PC-3 (cell line): ENCODE measurements at regions of chr2 and their contacts with region 1.

Region 1: GRCh38 chr2:54969940-54970338 is 80.3 kb downstream of the RTN4 start:
- DNase-seq: no peak
- ATAC-seq: no peak
- H3K4me3 ChIP-seq: no peak overlapping the region
- H3K27ac ChIP-seq: no peak overlapping the region
- H3K4me1 ChIP-seq: peaks cover 19% of the 10 kb centered on the region
- H3K27me3 ChIP-seq: no peaks in the 10 kb centered on the region
- CTCF ChIP-seq: no peak

Region 2: DNA sequence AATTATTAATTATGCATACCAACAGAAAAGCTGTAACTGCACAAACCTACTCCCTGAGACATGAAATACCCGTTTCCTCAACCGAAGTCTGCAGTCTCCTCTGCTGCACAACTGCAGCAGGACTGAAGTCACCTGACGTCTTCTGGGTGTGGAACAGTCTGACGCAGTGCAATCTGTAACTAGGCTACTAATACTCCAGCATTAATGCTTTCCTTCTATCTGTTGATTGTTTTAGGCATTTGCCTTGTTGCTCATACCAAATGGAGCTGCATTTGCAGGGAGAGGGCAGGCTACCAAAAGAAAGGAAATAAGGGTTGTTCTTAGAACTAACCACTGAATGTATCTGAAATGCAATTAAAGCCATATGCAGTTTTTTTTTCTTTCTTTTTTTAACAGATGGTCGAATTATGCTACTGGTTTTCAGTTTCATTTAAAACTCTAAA is 40.2 kb after region 1 on chr2:
- CTCF ChIA-PET with region 1: no interaction called
- POLR2A ChIA-PET with region 1: no interaction called
- intact Hi-C with region 1: loop called (anchors 5 kb)
- DNase-seq: peak; percentile 31
- ATAC-seq: peak; percentile 35
- H3K4me3 ChIP-seq: no peak overlapping the region
- H3K27ac ChIP-seq: no peak overlapping the region
- H3K4me1 ChIP-seq: peaks cover 54% of the 10 kb centered on the region
- H3K27me3 ChIP-seq: no peaks in the 10 kb centered on the region
- CTCF ChIP-seq: no peak

Region 3: GRCh38 chr2:55038428-55038827 is 68.5 kb after region 1 on chr2:
- CTCF ChIA-PET with region 1: interaction called, 10 read pairs
- POLR2A ChIA-PET with region 1: no interaction called
- intact Hi-C with region 1: no loop called
- DNase-seq: peak; percentile 50
- ATAC-seq: peak; percentile 41; the same call in 1 of the 2 replicates
- H3K4me3 ChIP-seq: no peak overlapping the region; the same call in 1 of the 2 replicates
- H3K27ac ChIP-seq: peak overlapping the region; percentile 28
- H3K4me1 ChIP-seq: peaks cover 44% of the 10 kb centered on the region
- H3K27me3 ChIP-seq: no peaks in the 10 kb centered on the region
- CTCF ChIP-seq: no peak